Esophagus muscularis mucosa (tissue), 4 donors: ENCODE measurements at regions of chr1 and their contacts with region 1.

Region 1: GRCh38 chr1:243732637-243733036 is 117.4 kb downstream of the AKT3 start:
- DNase-seq: no peak
- H3K4me3 ChIP-seq: no peak overlapping the region
- H3K27ac ChIP-seq: no peak overlapping the region
- H3K4me1 ChIP-seq: peaks cover 0 to 47% (median 30%) of the 10 kb centered on the region in 4 donors
- H3K27me3 ChIP-seq: no peaks in the 10 kb centered on the region
- CTCF ChIP-seq: no peak
- EP300 ChIP-seq: no peak
- POLR2A ChIP-seq: no peak

Region 2: DNA sequence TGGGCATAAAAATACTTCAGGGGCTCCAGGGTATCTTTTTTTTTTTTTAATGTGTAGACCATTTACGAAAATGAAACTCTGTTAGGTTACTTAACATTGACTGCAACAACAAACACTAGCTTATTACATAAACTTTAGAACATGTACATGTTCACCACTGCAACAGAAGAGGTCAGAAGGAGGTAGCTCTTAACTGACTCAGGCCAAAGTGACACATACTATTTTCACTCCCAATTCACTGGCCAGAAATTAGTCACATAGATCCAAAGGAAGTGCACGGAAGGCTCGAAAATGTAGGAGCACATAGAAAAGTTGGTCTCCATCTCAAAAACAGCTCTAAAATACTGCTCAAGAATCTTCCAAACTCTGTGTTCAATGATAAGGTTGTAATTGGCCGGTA is 10.2 kb after region 1 on chr1:
- intact Hi-C with region 1: loop called (anchors 1 kb)
- DNase-seq: no peak
- H3K4me3 ChIP-seq: no peak overlapping the region
- H3K27ac ChIP-seq: no peak overlapping the region
- H3K4me1 ChIP-seq: peaks cover 13 to 37% (median 33%) of the 10 kb centered on the region in 4 donors
- H3K27me3 ChIP-seq: no peaks in the 10 kb centered on the region
- CTCF ChIP-seq: no peak
- EP300 ChIP-seq: no peak
- POLR2A ChIP-seq: no peak